SK-N-SH (cell line): ENCODE measurements at regions of chr11 and their contacts with region 1.

Region 1: DNA sequence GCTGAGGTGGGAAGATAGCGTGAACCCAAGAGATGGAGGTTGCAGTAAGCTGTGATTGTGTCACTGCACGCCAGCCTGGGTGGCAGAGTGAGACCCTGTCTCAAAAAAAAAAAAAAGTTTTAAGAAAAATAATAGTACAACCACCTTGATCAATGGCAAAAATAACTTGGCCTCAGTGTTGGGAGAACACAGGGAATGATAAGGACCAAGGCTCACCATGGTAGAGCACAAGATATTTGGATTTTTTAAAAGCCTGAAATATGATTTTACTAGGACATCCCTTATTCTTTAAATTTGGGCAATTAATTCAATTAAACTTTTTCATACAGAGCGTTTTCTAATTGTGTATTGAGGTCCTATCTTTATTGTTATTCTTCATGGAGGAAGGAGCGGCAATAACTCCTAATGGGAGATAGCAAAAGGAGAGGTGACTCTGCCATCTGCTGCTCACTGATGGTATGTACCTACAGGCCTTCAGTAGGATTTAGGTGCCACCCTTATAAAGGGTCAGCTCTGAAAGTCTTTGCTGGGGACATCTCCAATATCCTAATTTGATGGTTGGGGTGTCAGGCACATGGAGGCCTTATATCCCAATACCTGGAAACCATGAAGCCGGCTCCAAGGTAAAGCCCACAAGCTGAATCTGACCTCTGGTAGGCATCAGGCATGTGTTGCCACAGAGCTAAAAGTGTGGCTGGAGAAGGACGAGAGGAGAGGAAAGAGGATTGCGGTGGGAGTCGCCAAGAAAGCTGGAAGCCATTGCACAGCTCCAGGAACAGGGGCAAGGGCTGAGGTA is 21.9 kb upstream of the POLD3 start:
- DNase-seq: peak; percentile 70
- H3K4me3 ChIP-seq: no peak overlapping the region; a peak in 1 of 4 replicates
- H3K27ac ChIP-seq: no peak overlapping the region
- H3K4me1 ChIP-seq: no peaks in the 10 kb centered on the region
- H3K27me3 ChIP-seq: no peaks in the 10 kb centered on the region; the same call in 1 of the 2 replicates
- CTCF ChIP-seq: peak; percentile 74
- EP300 ChIP-seq: no peak
- RAD21 ChIP-seq: peak; percentile 93

Region 2: GRCh38 chr11:74462009-74462408 is 108.5 kb before region 1 on chr11:
- CTCF ChIA-PET with region 1: interaction called, 16 read pairs
- POLR2A ChIA-PET with region 1: no interaction called
- DNase-seq: no peak
- H3K4me3 ChIP-seq: no peak overlapping the region
- H3K27ac ChIP-seq: no peak overlapping the region
- H3K4me1 ChIP-seq: no peaks in the 10 kb centered on the region
- H3K27me3 ChIP-seq: no peaks in the 10 kb centered on the region; the same call in 1 of the 2 replicates
- CTCF ChIP-seq: no peak
- EP300 ChIP-seq: no peak
- RAD21 ChIP-seq: no peak

Region 3: GRCh38 chr11:74492974-74493790 is 77.3 kb before region 1 on chr11 and contains the start of gene LIPT2:
- CTCF ChIA-PET with region 1: interaction called, 12 read pairs
- POLR2A ChIA-PET with region 1: interaction called, 4 read pairs
- DNase-seq: peak; percentile 93
- H3K4me3 ChIP-seq: peak within 1 kb of the TSS; percentile 76 to 90
- H3K27ac ChIP-seq: peak within 1 kb of the TSS; percentile 79 to 98
- H3K4me1 ChIP-seq: peaks cover 0 to 10% of the 10 kb centered on the region in 2 experiments; a peak in 2 of 4 replicates
- H3K27me3 ChIP-seq: no peaks in the 10 kb centered on the region
- CTCF ChIP-seq: no peak
- EP300 ChIP-seq: peak in 1 of 2 experiments; percentile 35; a peak in 1 of 4 replicates
- RAD21 ChIP-seq: no peak
- polyA plus RNA-seq, gene LIPT2: 4.6 and 5.3 TPM in 2 replicates

Region 4: GRCh38 chr11:74559110-74559933 is 11.1 kb before region 1 on chr11:
- CTCF ChIA-PET with region 1: interaction called, 22 read pairs
- POLR2A ChIA-PET with region 1: no interaction called
- DNase-seq: no peak
- H3K4me3 ChIP-seq: no peak overlapping the region
- H3K27ac ChIP-seq: no peak overlapping the region
- H3K4me1 ChIP-seq: no peaks in the 10 kb centered on the region
- H3K27me3 ChIP-seq: no peaks in the 10 kb centered on the region; the same call in 1 of the 2 replicates
- CTCF ChIP-seq: no peak
- EP300 ChIP-seq: no peak
- RAD21 ChIP-seq: no peak

Region 5: DNA sequence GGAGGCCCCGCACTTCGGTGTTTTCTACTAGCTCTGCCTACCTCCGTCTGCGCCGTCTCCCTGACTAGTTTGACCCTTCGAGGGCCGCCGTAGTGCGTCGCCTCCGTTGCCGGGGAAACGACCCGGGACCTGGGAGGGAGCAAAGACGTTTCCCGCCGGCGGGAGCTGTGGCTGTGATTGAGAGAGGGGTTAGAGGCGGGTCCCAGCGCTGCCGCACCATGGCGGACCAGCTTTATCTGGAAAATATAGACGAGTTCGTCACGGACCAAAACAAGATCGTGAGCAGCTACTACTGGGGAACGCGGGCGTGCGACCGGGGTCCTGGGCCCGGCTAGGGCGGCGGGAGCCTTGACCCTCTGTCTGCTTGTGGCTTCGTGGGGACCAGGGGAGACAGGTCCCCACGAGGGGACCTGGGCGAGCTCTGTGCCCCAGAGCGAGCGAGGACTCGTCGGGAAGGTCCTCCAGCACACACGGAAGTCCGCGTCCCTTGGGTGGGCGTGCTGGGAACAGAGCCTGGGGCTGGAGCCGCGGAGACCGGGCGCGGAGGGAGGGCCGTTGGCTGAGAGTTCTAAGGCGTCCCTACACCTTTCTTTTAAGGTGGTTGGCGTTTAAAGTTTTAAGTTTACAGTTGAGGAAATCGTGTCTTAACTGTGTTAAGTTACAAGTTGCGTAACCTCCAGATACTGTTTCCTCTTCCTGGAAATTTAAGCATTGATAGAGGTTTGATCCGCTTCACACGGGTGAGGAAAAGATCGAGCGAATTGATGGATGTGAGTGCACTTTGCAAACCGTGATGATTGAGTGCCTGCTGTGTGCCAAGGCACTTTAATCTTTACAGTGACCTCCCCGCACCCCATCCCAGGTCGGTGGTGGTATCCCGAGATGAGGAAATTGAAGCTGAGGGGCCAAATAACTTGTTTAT is 22.2 kb after region 1 on chr11 and contains the start of gene POLD3:
- CTCF ChIA-PET with region 1: interaction called, 12 read pairs
- POLR2A ChIA-PET with region 1: no interaction called
- DNase-seq: peak; percentile 92
- H3K4me3 ChIP-seq: peak within 1 kb of the TSS; percentile 81 to 100
- H3K27ac ChIP-seq: peak within 1 kb of the TSS; percentile 78 to 79
- H3K4me1 ChIP-seq: no peaks in the 10 kb centered on the region; a peak in 2 of 4 replicates
- H3K27me3 ChIP-seq: no peaks in the 10 kb centered on the region
- CTCF ChIP-seq: no peak
- EP300 ChIP-seq: peak; percentile 6 to 26; a peak in 1 of 4 replicates
- RAD21 ChIP-seq: no peak
- polyA plus RNA-seq, gene POLD3: 7.9 and 9.5 TPM in 2 replicates